Heart right ventricle (tissue), 16 donors: ENCODE measurements at regions of chr10 and their contacts with region 1.

Region 1: DNA sequence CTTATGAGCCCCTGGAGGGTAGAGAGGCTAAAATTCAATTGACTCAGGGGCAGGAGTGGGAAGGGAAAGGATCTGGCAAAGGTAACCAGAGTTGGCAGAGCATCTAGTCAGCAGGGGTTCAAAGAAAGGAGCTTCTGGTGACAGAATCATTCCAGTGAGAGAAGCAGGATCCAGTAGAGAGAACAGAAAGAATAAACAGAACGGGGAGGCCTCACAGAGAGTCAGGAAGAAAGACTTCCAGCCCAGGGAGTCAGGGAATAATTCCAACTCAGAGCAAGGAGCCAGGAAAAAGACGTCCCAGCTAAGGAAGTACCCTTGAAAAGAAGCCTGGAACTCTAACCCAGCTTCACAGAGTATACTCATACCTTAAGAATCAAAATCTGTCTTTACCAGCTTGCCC is 66.6 kb upstream of the CPXM2 start:
- DNase-seq: no peak
- ATAC-seq: no peak
- H3K4me3 ChIP-seq: no peak overlapping the region
- H3K27ac ChIP-seq: no peak overlapping the region
- H3K4me1 ChIP-seq: no peaks in the 10 kb centered on the region
- H3K27me3 ChIP-seq: peaks cover 0 to 24% (median 13%) of the 10 kb centered on the region in 7 donors
- CTCF ChIP-seq: no peak

Region 2: DNA sequence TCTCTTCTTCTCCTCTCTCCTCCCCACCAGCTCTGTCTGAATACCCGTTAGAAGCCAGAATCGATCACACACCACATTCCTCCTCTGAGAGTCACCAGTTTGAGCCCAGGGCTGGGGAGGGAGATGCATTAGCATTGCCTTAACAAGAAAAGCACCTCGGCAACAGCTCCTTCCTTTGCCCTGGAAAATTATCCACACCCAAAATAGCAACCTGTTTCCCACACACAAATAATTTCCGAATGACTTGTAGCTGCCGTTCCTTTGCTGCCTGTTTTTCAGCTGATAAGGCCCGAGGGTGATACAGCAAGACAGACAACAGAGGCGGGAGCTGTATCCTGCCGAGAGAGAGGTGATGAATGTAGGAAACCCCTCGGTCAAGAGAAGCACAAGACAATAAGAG is 158.0 kb before region 1 on chr10:
- intact Hi-C with region 1: loop called in 1 of 10 experiments (anchors 5 kb)
- DNase-seq: peak in 1 of 2 donors; percentile 23
- ATAC-seq: peak in 6 of 8 donors; percentile 44 to 92 (median 78)
- H3K4me3 ChIP-seq: no peak overlapping the region
- H3K27ac ChIP-seq: peak overlapping the region in 5 of 10 donors; percentile 35 to 63 (median 49)
- H3K4me1 ChIP-seq: peaks cover 0 to 16% (median 2%) of the 10 kb centered on the region in 9 donors
- H3K27me3 ChIP-seq: no peaks in the 10 kb centered on the region
- CTCF ChIP-seq: no peak